AG04450 (cell line): ENCODE measurements at regions of chr15 and their contacts with region 1.

Region 1: DNA sequence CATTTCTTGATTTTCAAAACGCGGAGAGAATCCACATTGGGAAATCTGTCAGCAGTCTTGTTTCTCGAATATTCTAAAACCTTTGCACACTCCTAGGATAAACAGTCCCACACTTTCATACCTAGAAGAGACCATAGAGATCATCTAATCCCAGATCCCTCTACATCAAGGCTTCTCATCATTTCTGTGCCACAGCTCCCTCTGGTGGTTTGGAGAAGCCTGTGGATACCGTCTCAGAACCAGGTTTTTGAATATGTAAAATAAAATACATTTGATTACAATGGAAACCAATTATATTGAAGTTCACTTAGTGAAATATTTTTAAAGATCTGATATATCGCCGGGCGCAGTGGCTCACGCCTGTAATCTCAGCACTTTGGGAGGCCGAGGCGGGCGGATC is 211.9 kb upstream of the GOLGA6L4 start:
- DNase-seq: peak; percentile 2
- H3K4me3 ChIP-seq: no peak overlapping the region
- H3K27ac ChIP-seq: no peak overlapping the region
- H3K27me3 ChIP-seq: peaks cover 5% of the 10 kb centered on the region
- CTCF ChIP-seq: peak; percentile 76

Region 2: GRCh38 chr15:83564975-83565532 is 458.6 kb before region 1 on chr15:
- CTCF ChIA-PET with region 1: interaction called, 18 read pairs
- POLR2A ChIA-PET with region 1: no interaction called
- DNase-seq: no peak
- H3K4me3 ChIP-seq: no peak overlapping the region
- H3K27ac ChIP-seq: no peak overlapping the region
- H3K27me3 ChIP-seq: no peaks in the 10 kb centered on the region
- CTCF ChIP-seq: no peak

Region 3: GRCh38 chr15:83734487-83734886 is 289.1 kb before region 1 on chr15:
- CTCF ChIA-PET with region 1: interaction called, 11 read pairs
- POLR2A ChIA-PET with region 1: no interaction called
- DNase-seq: no peak
- H3K4me3 ChIP-seq: no peak overlapping the region
- H3K27ac ChIP-seq: no peak overlapping the region
- H3K27me3 ChIP-seq: no peaks in the 10 kb centered on the region
- CTCF ChIP-seq: peak; percentile 56

Region 4: DNA sequence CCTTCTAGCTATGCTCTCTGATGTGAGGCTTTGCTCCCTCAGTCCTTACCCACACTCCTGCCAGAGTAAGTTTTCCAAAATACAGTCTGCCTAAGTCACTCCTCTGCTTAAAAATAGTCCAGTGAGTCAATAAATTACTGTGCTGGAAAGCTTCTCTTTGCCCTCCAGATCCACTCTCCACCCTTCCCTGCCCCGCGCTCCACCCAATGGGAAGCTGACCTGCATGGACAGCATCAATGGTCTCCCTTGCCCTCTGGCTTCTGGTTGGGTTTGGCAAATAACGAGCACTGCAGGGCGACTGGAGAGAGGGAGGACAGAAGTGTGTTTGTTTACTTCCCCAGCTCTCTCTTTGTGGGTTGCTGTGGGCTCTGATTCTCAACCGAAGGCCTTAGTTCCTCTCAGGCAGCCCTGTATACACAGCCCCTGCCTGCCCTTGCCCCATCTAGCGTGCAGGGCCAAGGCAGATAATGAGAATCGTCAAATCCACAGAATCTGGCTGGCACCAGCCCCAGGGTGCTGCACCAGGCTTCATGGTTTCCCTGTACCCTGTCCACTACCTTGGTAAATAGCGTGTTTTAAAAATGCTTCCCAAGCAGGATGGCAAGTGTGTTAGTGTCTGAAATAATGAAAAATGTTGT is 259.3 kb before region 1 on chr15:
- CTCF ChIA-PET with region 1: no interaction called
- POLR2A ChIA-PET with region 1: no interaction called
- DNase-seq: no peak
- H3K4me3 ChIP-seq: no peak overlapping the region
- H3K27ac ChIP-seq: no peak overlapping the region
- H3K27me3 ChIP-seq: no peaks in the 10 kb centered on the region
- CTCF ChIP-seq: no peak

Region 5: DNA sequence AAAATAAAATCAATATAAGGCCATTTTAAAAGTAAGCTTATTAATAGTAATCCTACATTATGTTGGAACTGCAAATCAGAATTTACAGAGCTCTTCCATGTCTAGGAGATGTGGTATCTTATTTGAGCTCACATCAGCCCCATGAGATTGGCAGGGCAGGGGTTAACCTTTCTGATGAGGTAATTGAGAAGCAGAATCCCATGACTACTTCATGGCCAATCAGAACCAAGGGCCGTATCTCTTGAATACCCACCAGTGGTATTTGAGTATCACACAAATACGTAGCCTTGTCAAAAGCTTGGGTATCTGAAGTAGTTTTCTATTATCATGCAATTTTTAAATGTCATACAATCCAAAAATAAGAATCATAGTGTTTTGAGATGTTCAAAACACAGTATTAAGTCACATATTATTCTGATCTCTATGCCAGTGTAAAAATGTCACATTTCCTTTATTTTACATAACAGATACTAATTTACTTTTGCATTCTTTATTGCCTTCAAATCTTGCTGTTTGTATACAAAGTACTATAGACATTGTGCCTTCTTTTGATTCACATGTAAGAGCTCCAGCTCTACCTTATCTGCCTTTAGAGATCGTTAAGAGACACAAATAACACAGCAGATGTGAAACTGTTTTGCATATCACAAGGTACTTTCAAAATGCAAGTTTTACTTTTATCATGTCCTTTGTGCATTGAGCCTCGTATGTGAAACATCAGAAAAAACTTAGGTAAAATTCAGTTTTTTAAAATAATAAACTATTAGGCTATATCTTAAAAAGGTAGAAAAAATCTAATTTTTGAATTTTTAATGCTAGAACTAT is 39.8 kb before region 1 on chr15:
- CTCF ChIA-PET with region 1: no interaction called
- POLR2A ChIA-PET with region 1: no interaction called
- DNase-seq: no peak
- H3K4me3 ChIP-seq: no peak overlapping the region
- H3K27ac ChIP-seq: no peak overlapping the region
- H3K27me3 ChIP-seq: no peaks in the 10 kb centered on the region
- CTCF ChIP-seq: no peak

Region 6: GRCh38 chr15:84035399-84035766 is 11.7 kb after region 1 on chr15:
- CTCF ChIA-PET with region 1: interaction called, 13 read pairs
- POLR2A ChIA-PET with region 1: no interaction called
- DNase-seq: peak; percentile 7
- H3K4me3 ChIP-seq: no peak overlapping the region
- H3K27ac ChIP-seq: no peak overlapping the region
- H3K27me3 ChIP-seq: no peaks in the 10 kb centered on the region
- CTCF ChIP-seq: peak; percentile 63